ENCODE measurements at regions of chr4 and their contacts with region 1.

Region 1: GRCh38 chr4:48727666-48728459 is 52.2 kb downstream of the FRYL start:
- DNase-seq: no peak
- ATAC-seq: no peak
- H3K4me3 ChIP-seq: no peak overlapping the region
- H3K4me3 Mint-ChIP-seq: no peak overlapping the region
- H3K27ac ChIP-seq: peak overlapping the region in 1 of 2 donors; percentile 13
- H3K27ac Mint-ChIP-seq: no peak overlapping the region
- H3K4me1 ChIP-seq: peaks cover 21 to 28% of the 10 kb centered on the region in 2 donors
- H3K4me1 Mint-ChIP-seq: peaks cover 87% of the 10 kb centered on the region
- H3K27me3 ChIP-seq: no peaks in the 10 kb centered on the region
- H3K27me3 Mint-ChIP-seq: no peaks in the 10 kb centered on the region
- CTCF ChIP-seq: no peak

Region 2: GRCh38 chr4:48766131-48766792 is 38.4 kb after region 1 on chr4:
- CTCF ChIA-PET with region 1: no interaction called
- POLR2A ChIA-PET with region 1: no interaction called
- intact Hi-C with region 1: loop called (anchors 5 kb)
- DNase-seq: peak; percentile 27
- ATAC-seq: peak; percentile 60
- H3K4me3 ChIP-seq: no peak overlapping the region
- H3K4me3 Mint-ChIP-seq: peak overlapping the region; percentile 61
- H3K27ac ChIP-seq: no peak overlapping the region
- H3K27ac Mint-ChIP-seq: no peak overlapping the region
- H3K4me1 ChIP-seq: peaks cover 7 to 18% of the 10 kb centered on the region in 2 donors
- H3K4me1 Mint-ChIP-seq: peaks cover 49% of the 10 kb centered on the region
- H3K27me3 ChIP-seq: no peaks in the 10 kb centered on the region
- H3K27me3 Mint-ChIP-seq: no peaks in the 10 kb centered on the region
- CTCF ChIP-seq: no peak